Thyroid gland (tissue), 4 donors: ENCODE measurements at regions of chr11 and their contacts with region 1.

Region 1: GRCh38 chr11:34105079-34105956 is at the start of gene NAT10:
- DNase-seq: peak; percentile 96 to 97
- H3K4me3 ChIP-seq: peak within 1 kb of the TSS; percentile 45 to 89 (median 73)
- H3K27ac ChIP-seq: peak within 1 kb of the TSS; percentile 39 to 92 (median 91)
- H3K4me1 ChIP-seq: peaks cover 8 to 16% of the 10 kb centered on the region in 2 donors
- H3K27me3 ChIP-seq: no peaks in the 10 kb centered on the region
- CTCF ChIP-seq: peak in 1 of 6 experiments; percentile 34
- POLR2A ChIP-seq: peak in 1 of 2 donors; percentile 85
- total RNA-seq, gene NAT10: 25.9 to 32.9 (median 31.2) TPM

Region 2: GRCh38 chr11:33996498-33997454 is 108.5 kb before region 1 on chr11:
- intact Hi-C with region 1: loop called (anchors 10 kb)
- DNase-seq: peak; percentile 66 to 71
- H3K4me3 ChIP-seq: no peak overlapping the region
- H3K27ac ChIP-seq: no peak overlapping the region
- H3K4me1 ChIP-seq: peaks cover 0 to 6% of the 10 kb centered on the region in 2 donors
- H3K27me3 ChIP-seq: no peaks in the 10 kb centered on the region
- CTCF ChIP-seq: peak; percentile 67 to 81 (median 72)
- POLR2A ChIP-seq: no peak

Region 3: GRCh38 chr11:34051349-34052035 is 53.8 kb before region 1 on chr11 and contains the start of gene CAPRIN1:
- intact Hi-C with region 1: loop called (anchors 2 kb)
- DNase-seq: peak; percentile 85 to 87
- H3K4me3 ChIP-seq: peak within 1 kb of the TSS; percentile 74 to 97 (median 96)
- H3K27ac ChIP-seq: peak within 1 kb of the TSS; percentile 98 to 100 (median 100)
- H3K4me1 ChIP-seq: peaks cover 26 to 38% of the 10 kb centered on the region in 2 donors
- H3K27me3 ChIP-seq: no peaks in the 10 kb centered on the region
- CTCF ChIP-seq: no peak
- POLR2A ChIP-seq: peak; percentile 6 to 77
- total RNA-seq, gene CAPRIN1: 164 to 207 (median 180) TPM